Vagina (tissue), 2 donors: ENCODE measurements at regions of chr2 and their contacts with region 1.

Region 1: GRCh38 chr2:168346725-168347477 is 99.5 kb upstream of the STK39 start:
- DNase-seq: no peak
- H3K4me3 ChIP-seq: peak overlapping the region; percentile 43 to 44
- H3K27ac ChIP-seq: no peak overlapping the region
- H3K4me1 ChIP-seq: no peaks in the 10 kb centered on the region
- H3K27me3 ChIP-seq: no peaks in the 10 kb centered on the region
- CTCF ChIP-seq: peak; percentile 61 to 91 (median 89)
- POLR2A ChIP-seq: no peak

Region 2: GRCh38 chr2:168231609-168232241 is 115.2 kb before region 1 on chr2:
- intact Hi-C with region 1: no loop called
- DNase-seq: no peak
- H3K4me3 ChIP-seq: no peak overlapping the region
- H3K27ac ChIP-seq: no peak overlapping the region
- H3K4me1 ChIP-seq: no peaks in the 10 kb centered on the region
- H3K27me3 ChIP-seq: no peaks in the 10 kb centered on the region
- CTCF ChIP-seq: no peak
- POLR2A ChIP-seq: no peak

Region 3: DNA sequence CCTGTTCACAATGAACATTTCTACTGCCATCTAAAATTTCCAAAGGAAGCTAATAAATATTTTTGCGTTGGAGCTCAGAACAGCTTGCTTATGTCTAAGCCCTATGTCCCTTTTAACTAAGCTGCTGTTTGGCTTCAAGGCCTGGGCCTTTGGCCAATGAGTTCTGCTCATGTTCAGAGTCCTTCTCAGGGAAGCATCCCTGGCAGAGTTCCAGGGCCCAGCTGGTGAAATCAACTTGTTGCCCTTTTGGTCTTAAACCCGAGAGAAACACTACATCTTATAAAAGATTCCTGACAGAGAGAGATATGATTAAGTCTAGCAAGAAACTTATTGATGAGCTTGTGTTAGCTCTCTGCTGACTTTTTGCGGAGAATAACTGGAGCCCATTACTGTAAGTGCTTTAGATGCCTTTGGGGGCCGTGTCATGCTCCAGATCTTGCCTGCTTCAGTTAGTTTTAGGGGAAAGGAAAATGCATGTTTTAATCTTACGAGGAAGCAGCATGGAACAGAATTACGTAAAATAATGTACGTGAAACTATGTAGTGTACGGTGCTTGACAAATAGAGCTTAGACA is 353.0 kb after region 1 on chr2:
- intact Hi-C with region 1: loop called (anchors 10 kb)
- DNase-seq: no peak
- H3K4me3 ChIP-seq: no peak overlapping the region
- H3K27ac ChIP-seq: no peak overlapping the region
- H3K4me1 ChIP-seq: peaks cover 9% of the 10 kb centered on the region
- H3K27me3 ChIP-seq: no peaks in the 10 kb centered on the region
- CTCF ChIP-seq: no peak
- POLR2A ChIP-seq: no peak

Region 4: GRCh38 chr2:168758970-168759820 is 412.3 kb after region 1 on chr2:
- intact Hi-C with region 1: loop called (anchors 2 kb)
- DNase-seq: no peak
- H3K4me3 ChIP-seq: no peak overlapping the region
- H3K27ac ChIP-seq: no peak overlapping the region
- H3K4me1 ChIP-seq: no peaks in the 10 kb centered on the region
- H3K27me3 ChIP-seq: no peaks in the 10 kb centered on the region
- CTCF ChIP-seq: peak in 2 of 3 experiments; percentile 41 to 52
- POLR2A ChIP-seq: no peak

Region 5: GRCh38 chr2:168920504-168921157 is 573.7 kb after region 1 on chr2:
- intact Hi-C with region 1: loop called (anchors 5 kb)
- DNase-seq: no peak
- H3K4me3 ChIP-seq: no peak overlapping the region
- H3K27ac ChIP-seq: no peak overlapping the region
- H3K4me1 ChIP-seq: no peaks in the 10 kb centered on the region
- H3K27me3 ChIP-seq: no peaks in the 10 kb centered on the region
- CTCF ChIP-seq: peak in 1 of 3 experiments; percentile 32
- POLR2A ChIP-seq: no peak

Region 6: DNA sequence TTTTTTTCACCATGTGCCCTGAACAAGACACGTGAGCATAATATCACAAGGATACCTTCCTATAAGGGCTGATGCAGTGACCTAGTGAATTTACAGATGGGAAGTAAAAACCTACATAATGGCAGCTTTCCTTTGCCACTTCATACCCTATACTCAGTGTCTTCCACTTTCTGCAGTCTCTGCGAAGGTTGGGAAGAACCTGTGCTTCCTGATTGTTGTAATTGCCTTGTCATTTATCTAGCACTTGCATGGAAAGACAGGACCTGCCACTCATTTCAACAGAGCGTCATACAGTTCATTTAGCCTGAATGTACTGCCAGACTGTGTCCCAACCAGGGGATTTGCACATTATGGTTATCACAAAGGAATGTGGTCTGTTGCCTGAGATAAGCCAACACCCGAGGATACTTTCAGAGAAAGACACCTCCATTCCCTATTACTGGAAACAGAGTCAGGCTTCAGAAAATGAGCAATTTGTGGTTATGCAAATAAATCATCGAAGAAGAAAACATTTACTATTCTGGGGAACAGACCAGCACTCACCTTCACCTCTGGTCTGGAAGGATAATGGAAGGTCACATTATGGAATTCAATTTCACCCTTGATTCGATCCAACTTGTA is 629.2 kb after region 1 on chr2:
- intact Hi-C with region 1: no loop called
- DNase-seq: no peak
- H3K4me3 ChIP-seq: no peak overlapping the region
- H3K27ac ChIP-seq: no peak overlapping the region
- H3K4me1 ChIP-seq: no peaks in the 10 kb centered on the region
- H3K27me3 ChIP-seq: no peaks in the 10 kb centered on the region
- CTCF ChIP-seq: no peak
- POLR2A ChIP-seq: no peak